ENCODE measurements at regions of chrX and their contacts with region 1.

Region 1: DNA sequence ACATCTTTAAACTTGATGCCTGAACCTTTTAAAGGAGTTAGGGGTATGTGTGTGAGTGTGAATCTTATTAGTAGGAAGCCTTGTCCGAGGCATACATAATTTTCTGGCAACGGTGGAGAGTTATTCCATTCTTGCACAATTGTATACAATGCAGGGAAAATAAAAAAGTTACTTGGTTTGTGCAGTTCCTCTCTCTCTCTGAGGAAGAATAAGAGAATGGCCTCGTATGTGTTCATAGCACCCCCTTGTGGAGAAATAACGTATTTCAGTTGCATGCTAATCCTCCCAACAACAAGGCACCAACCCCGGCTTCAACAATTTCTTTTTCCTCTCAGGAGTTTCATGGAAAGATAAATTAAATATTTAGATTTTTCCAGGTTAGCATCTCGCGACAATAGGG is 33.7 kb upstream of the FGF13 start:
- DNase-seq: peak; percentile 32
- H3K4me3 ChIP-seq: no peak overlapping the region
- H3K27ac ChIP-seq: no peak overlapping the region
- H3K4me1 ChIP-seq: no peaks in the 10 kb centered on the region
- CTCF ChIP-seq: peak; percentile 77

Region 2: DNA sequence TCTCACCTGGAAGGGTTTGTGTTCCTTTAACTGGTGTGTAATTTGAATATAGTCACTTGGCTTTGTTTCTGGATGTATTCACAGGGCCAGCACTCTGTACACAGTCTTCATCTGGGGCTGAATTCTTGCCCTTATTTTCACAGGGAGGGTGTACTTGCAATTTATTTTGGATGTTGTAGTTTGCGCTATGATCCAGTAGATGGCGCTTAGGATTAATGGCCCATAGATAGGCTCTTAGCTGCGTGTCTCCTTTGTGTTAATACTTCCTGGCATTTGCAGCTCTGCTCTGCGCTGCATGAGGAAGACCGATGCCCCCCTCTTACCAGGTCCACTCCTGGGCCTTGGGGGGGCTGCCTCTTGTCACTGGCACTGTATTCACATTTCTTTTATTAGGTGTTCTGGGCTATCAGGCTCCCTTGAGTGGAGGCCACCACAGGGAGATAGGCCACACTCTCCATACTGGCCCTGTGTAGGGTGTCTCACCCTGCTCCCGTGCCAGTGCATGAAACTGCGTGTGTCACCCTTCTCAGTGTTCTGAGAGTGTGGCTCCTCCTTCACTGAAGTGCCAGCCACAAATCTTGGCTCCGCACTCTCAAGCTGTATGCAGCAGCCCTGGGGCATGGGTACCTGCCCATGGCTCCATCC is 617.0 kb before region 1 on chrX:
- CTCF ChIA-PET with region 1: no interaction called
- POLR2A ChIA-PET with region 1: no interaction called
- intact Hi-C with region 1: loop called (anchors 2 kb)
- DNase-seq: peak; percentile 24
- H3K4me3 ChIP-seq: no peak overlapping the region
- H3K27ac ChIP-seq: no peak overlapping the region
- H3K4me1 ChIP-seq: no peaks in the 10 kb centered on the region
- CTCF ChIP-seq: peak; percentile 72

Region 3: DNA sequence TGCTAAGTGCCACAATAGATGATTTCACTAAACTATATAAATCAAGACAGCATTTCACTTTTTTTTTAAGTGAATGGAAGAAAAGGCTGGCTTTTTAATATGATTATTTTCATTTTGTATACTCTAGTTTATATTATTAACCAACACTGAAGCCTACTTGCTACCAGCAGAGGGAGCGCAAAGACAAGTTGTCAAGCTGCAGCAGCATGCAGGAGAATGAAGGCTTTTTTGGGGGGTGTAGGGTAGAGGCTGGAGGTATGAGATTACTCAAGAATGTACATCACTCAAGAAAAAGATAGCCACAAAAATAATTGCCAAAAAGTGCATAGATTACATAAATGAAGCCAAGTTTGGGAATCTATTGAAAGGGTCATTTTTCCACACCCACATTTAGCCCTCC is 553.2 kb before region 1 on chrX:
- CTCF ChIA-PET with region 1: no interaction called
- POLR2A ChIA-PET with region 1: no interaction called
- intact Hi-C with region 1: loop called (anchors 2 kb)
- DNase-seq: peak; percentile 15
- H3K4me3 ChIP-seq: no peak overlapping the region
- H3K27ac ChIP-seq: no peak overlapping the region
- H3K4me1 ChIP-seq: no peaks in the 10 kb centered on the region
- CTCF ChIP-seq: peak; percentile 70